Activated B cell treated with CpG ODN at 0.5 μM for 24 hours (primary cell): ENCODE measurements at regions of chr1 and their contacts with region 1.

Region 1: GRCh38 chr1:45011837-45012638 is at the start of gene UROD:
- DNase-seq: peak; percentile 69
- ATAC-seq: peak; percentile 84
- H3K4me3 Mint-ChIP-seq: peak within 1 kb of the TSS; percentile 83
- H3K27ac Mint-ChIP-seq: peak within 1 kb of the TSS; percentile 81
- H3K4me1 Mint-ChIP-seq: peaks cover 43% of the 10 kb centered on the region
- H3K27me3 Mint-ChIP-seq: no peaks in the 10 kb centered on the region
- CTCF ChIP-seq: no peak
- total RNA-seq, gene UROD: 60.3 and 64.9 TPM in 2 replicates

Region 2: DNA sequence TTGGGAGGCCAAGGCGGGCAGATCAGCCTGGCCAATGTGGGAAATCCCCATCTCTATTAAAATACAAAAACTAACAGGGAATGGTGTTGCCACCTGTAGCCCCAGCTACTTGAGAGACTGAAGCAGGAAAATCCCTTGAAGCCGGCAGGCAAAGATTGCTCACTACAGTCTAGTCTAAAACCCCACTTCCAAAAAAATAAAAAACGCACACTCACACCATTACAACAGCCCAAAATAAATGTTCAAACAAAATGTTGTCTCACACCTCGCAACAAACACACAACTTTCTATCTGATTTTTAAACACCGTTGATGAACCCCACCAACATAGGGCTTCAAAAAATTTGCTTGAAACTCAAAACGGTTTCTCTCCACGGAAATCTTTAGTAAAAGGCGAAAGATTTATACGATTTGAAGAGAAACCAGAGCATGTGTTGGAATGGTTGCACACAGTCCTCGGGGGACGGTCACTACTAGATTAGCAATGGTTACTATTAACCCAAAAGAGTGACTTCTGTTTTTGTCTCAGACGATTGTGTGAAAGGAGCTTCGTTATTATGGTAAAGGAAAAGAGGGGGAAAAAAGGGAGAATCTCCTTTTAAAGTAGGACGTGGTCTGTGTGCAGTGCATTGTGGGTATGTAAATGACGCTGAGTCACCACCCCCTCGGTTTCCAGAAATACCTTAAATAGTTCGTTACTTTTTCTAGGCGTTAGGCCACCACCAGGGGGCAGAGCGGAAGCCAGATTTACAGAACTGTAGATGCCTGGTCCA is 281.1 kb before region 1 on chr1 and contains the start of gene RNU5D-1:
- CTCF ChIA-PET with region 1: interaction called, 10 read pairs
- POLR2A ChIA-PET with region 1: interaction called, 51 read pairs
- intact Hi-C with region 1: loop called (anchors 2 kb)
- DNase-seq: peak; percentile 84
- ATAC-seq: peak; percentile 71
- H3K4me3 Mint-ChIP-seq: peak within 1 kb of the TSS; percentile 78
- H3K27ac Mint-ChIP-seq: peak within 1 kb of the TSS; percentile 100
- H3K4me1 Mint-ChIP-seq: peaks cover 37% of the 10 kb centered on the region
- H3K27me3 Mint-ChIP-seq: no peaks in the 10 kb centered on the region
- CTCF ChIP-seq: peak; percentile 39
- total RNA-seq, gene RNU5D-1: not detected in 2 replicates

Region 3: GRCh38 chr1:44819608-44820327 is 192.3 kb before region 1 on chr1:
- CTCF ChIA-PET with region 1: no interaction called
- POLR2A ChIA-PET with region 1: interaction called, 35 read pairs
- intact Hi-C with region 1: no loop called
- DNase-seq: peak; percentile 80
- ATAC-seq: peak; percentile 85
- H3K4me3 Mint-ChIP-seq: peak overlapping the region; percentile 88
- H3K27ac Mint-ChIP-seq: peak overlapping the region; percentile 100
- H3K4me1 Mint-ChIP-seq: peaks cover 35% of the 10 kb centered on the region
- H3K27me3 Mint-ChIP-seq: no peaks in the 10 kb centered on the region
- CTCF ChIP-seq: no peak

Region 4: GRCh38 chr1:45339789-45340570 is 327.9 kb after region 1 on chr1 and contains the starts of genes MUTYH and TOE1:
- CTCF ChIA-PET with region 1: interaction called, 14 read pairs
- POLR2A ChIA-PET with region 1: interaction called, 52 read pairs
- intact Hi-C with region 1: loop called (anchors 1 kb)
- DNase-seq: peak; percentile 85
- ATAC-seq: peak; percentile 86
- H3K4me3 Mint-ChIP-seq: peak within 1 kb of the TSS; percentile 100
- H3K27ac Mint-ChIP-seq: peak within 1 kb of the TSS; percentile 99
- H3K4me1 Mint-ChIP-seq: peaks cover 39% of the 10 kb centered on the region
- H3K27me3 Mint-ChIP-seq: no peaks in the 10 kb centered on the region
- CTCF ChIP-seq: no peak
- total RNA-seq, gene MUTYH: 61.0 and 63.0 TPM in 2 replicates
- total RNA-seq, gene TOE1: 24.6 and 25.3 TPM in 2 replicates

Region 5: DNA sequence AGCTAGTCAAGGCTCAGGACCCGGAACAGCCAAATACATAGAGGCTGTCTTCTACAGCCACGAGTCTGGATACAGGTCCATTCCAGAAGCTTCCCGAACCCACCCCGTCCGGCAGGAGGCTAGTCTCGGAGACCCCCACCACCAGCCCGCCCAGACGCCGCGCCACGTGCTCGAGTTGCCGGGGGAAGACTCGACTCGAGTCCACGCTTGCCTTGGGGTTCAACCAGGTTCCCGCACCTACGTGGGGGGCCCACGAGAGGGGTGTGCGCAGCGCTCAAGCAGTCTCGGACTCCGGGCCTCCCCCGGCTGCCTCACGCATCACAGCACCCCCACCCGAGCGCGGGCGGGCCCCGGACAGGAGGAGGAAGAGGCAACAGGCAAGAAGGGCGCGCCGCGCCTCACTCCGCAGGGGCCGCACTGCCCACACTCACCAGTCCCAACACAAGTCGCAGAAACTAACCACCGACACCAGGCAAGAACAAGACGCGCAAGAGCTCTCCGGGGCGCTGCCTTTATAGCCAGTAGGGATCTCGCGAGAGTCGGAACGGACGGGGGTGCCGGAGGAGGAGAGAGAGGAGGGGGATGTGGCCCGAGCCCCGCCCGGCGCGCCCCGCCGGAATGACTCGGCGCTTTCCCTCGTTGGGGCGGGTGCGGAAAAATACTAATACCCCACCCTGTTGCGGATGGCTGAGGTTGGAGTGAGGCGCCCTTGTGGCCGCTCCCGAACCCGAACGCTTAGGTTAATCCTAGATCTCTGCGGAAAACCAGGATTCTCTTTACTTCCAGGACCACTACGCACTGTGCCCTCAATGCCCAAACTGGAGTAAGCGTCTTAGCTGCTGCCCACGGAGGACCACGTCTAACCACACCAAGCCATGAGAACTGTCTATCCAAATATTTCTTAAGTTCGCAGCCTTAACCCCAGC is 509.6 kb after region 1 on chr1 and contains the start of gene PRDX1:
- CTCF ChIA-PET with region 1: no interaction called
- POLR2A ChIA-PET with region 1: interaction called, 15 read pairs
- intact Hi-C with region 1: no loop called
- DNase-seq: peak; percentile 98
- ATAC-seq: peak; percentile 87
- H3K4me3 Mint-ChIP-seq: peak within 1 kb of the TSS; percentile 93
- H3K27ac Mint-ChIP-seq: peak within 1 kb of the TSS; percentile 92
- H3K4me1 Mint-ChIP-seq: peaks cover 49% of the 10 kb centered on the region
- H3K27me3 Mint-ChIP-seq: no peaks in the 10 kb centered on the region
- CTCF ChIP-seq: no peak
- total RNA-seq, gene PRDX1: 351 and 413 TPM in 2 replicates

Region 6: DNA sequence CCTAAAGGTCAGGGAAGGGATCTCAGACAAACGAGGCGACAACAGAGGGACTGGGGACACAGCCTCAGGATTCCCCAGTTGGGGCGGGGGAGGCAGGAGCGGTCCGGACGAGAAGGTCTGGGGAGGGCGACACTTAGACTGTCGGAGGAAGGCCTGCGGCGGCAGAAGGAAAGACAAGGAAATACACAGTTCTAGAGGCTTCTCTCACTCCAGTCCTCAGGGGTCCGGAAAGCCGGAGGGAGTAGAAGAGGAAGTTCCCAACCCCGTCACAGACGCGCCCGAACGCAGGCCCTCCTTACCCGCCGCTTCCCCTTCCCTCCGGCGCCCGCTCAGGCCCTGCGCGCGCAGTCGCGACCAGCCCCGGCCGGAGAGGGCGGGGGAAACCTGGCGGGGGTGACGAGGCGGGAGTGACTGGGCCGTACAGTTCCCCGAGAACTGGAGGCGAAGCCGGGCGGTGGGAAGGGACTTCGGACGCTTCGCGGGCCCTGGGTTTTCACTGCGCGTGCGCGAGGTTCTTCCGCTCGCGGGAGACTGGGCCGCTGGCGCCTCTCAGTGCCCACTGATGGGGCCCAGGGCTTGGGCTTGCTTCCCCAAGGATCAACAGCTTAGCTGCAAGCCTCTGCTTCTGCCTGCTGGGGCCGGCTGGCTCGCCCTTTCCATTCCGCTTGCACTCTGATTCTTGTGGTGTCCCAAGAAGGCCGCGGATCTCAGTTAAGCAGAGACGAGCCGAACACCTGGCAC is 738.4 kb after region 1 on chr1 and contains the start of gene IPP:
- CTCF ChIA-PET with region 1: no interaction called
- POLR2A ChIA-PET with region 1: no interaction called
- intact Hi-C with region 1: loop called (anchors 5 kb)
- DNase-seq: peak; percentile 96
- ATAC-seq: peak; percentile 95
- H3K4me3 Mint-ChIP-seq: peak within 1 kb of the TSS; percentile 93
- H3K27ac Mint-ChIP-seq: peak within 1 kb of the TSS; percentile 99
- H3K4me1 Mint-ChIP-seq: peaks cover 17% of the 10 kb centered on the region
- H3K27me3 Mint-ChIP-seq: no peaks in the 10 kb centered on the region
- CTCF ChIP-seq: no peak
- total RNA-seq, gene IPP: 10.2 and 11.4 TPM in 2 replicates